Endothelial cell of umbilical vein (primary cell): ENCODE measurements at regions of chr1 and their contacts with region 1.

Region 1: GRCh38 chr1:66527686-66528085 is 6.3 kb upstream of the SGIP1 start:
- DNase-seq: peak; percentile 91
- H3K4me3 ChIP-seq: no peak overlapping the region
- H3K27ac ChIP-seq: peak overlapping the region; percentile 81
- H3K4me1 ChIP-seq: peaks cover 35% of the 10 kb centered on the region
- H3K27me3 ChIP-seq: no peaks in the 10 kb centered on the region
- CTCF ChIP-seq: no peak
- POLR2A ChIP-seq: peak; percentile 47

Region 2: GRCh38 chr1:66542811-66543767 is 15.4 kb after region 1 on chr1:
- CTCF ChIA-PET with region 1: interaction called, 17 read pairs
- POLR2A ChIA-PET with region 1: no interaction called
- dilution Hi-C with region 1: no loop called
- intact Hi-C with region 1: loop called (anchors 2 kb)
- DNase-seq: peak; percentile 97
- H3K4me3 ChIP-seq: no peak overlapping the region
- H3K27ac ChIP-seq: peak overlapping the region; percentile 90
- H3K4me1 ChIP-seq: peaks cover 36% of the 10 kb centered on the region
- H3K27me3 ChIP-seq: no peaks in the 10 kb centered on the region
- CTCF ChIP-seq: no peak
- POLR2A ChIP-seq: no peak

Region 3: DNA sequence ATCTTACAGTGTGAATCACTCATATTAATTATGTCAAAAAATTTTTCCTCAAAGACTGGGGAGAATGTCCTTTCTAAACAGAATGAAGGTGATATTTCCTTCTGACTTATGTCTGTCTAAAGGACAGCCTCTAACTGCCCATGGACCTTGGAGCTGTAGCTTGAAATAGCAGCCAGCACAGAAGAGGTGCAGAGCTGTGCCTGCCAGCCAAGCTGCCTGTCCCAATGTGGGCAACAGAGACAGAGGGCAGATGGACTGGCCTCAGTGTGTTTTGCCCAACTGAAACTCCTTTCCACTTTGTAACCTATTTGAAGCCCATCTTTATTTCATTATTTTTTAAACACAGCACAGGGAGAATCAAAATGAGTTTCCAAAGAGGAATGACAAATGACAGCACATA is 127.0 kb after region 1 on chr1:
- CTCF ChIA-PET with region 1: no interaction called
- POLR2A ChIA-PET with region 1: no interaction called
- dilution Hi-C with region 1: no loop called
- intact Hi-C with region 1: no loop called
- DNase-seq: no peak
- H3K4me3 ChIP-seq: no peak overlapping the region
- H3K27ac ChIP-seq: no peak overlapping the region
- H3K4me1 ChIP-seq: no peaks in the 10 kb centered on the region
- H3K27me3 ChIP-seq: no peaks in the 10 kb centered on the region
- CTCF ChIP-seq: no peak
- POLR2A ChIP-seq: no peak

Region 4: GRCh38 chr1:66676613-66677298 is 149.1 kb after region 1 on chr1:
- CTCF ChIA-PET with region 1: interaction called, 3 read pairs
- POLR2A ChIA-PET with region 1: no interaction called
- dilution Hi-C with region 1: no loop called
- intact Hi-C with region 1: loop called (anchors 1 kb)
- DNase-seq: peak; percentile 94
- H3K4me3 ChIP-seq: no peak overlapping the region
- H3K27ac ChIP-seq: peak overlapping the region; percentile 74
- H3K4me1 ChIP-seq: peaks cover 31% of the 10 kb centered on the region
- H3K27me3 ChIP-seq: no peaks in the 10 kb centered on the region
- CTCF ChIP-seq: no peak
- POLR2A ChIP-seq: no peak